Body of pancreas (tissue), 4 donors: ENCODE measurements at regions of chr10 and their contacts with region 1.

Region 1: DNA sequence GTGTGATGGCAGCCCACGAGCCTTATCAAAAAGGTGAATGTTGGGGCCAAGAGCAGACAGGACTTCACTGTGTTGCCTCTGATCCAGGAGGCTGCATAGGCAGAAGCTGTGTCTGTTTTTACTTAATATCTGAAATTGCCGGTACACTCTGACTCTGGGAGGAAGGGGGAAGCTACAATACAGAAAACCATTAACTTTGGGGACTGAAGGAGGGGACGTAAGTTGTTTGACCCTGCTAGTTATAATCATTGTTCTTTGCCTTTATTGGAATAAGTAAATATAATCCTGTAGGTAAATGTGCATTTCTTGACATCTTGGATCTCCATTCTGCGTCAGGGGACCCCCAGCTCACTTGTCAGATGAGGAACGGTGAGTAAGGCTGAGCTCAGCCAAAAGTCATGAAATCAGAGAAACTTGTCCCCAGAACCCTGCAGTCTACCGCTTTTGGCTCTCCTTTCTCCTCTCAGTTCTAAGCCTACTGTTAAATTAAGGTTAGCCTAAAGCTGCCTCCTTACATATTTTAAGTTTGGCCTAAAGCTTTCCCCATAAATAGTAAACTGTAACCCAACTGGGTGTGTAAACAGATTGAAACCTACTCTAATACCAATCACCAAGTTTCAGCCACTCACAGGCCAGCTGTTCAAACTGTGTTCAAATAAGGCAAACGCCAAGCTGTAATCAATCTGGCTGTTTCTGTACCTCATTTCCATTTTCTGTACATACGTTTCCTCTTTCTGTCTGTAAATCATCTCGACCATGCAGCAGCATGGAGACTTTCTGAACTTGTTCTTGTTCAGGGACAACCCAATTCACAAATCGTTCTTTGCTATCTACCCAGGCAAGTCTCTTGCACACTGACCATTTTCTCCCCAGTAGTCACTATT is 86.8 kb downstream of the SLC16A9 start:
- DNase-seq: no peak
- ATAC-seq: no peak
- H3K4me3 ChIP-seq: no peak overlapping the region
- H3K27ac ChIP-seq: no peak overlapping the region
- H3K4me1 ChIP-seq: peaks cover 8% of the 10 kb centered on the region
- H3K27me3 ChIP-seq: no peaks in the 10 kb centered on the region
- CTCF ChIP-seq: peak in 1 of 7 experiments; percentile 23
- POLR2A ChIP-seq: no peak

Region 2: GRCh38 chr10:58164517-58164916 is 1458.3 kb before region 1 on chr10:
- intact Hi-C with region 1: no loop called
- DNase-seq: no peak
- ATAC-seq: no peak
- H3K4me3 ChIP-seq: no peak overlapping the region
- H3K27ac ChIP-seq: no peak overlapping the region
- H3K4me1 ChIP-seq: no peaks in the 10 kb centered on the region
- H3K27me3 ChIP-seq: no peaks in the 10 kb centered on the region
- CTCF ChIP-seq: no peak
- POLR2A ChIP-seq: no peak

Region 3: DNA sequence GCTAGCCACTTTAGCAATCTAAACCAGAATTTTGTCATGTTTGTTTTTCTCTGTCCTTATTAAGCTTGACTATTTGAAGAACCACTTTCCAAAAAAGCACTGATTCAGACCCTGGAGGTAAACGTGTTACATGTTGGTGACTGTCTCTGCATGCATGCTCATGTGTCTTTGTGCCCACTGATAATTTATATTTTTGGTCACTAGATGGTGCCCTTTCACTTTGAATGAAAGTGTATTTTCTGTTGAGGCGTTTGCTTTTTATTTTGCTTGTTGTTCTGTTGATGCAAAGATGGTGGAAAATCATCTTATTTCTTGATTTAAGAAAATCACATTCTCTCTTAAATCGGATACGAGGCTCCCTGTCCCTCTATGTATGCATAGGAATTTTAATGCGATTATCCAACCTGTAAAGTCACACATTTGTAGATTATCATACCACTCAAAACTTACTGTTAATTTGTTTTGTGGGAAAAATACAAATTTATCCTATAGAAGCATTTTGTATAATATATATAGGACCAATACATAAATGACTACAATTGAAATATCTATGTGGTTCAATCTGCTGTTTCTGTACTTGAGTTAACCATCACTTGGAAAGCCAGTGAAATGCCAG is 840.9 kb before region 1 on chr10:
- intact Hi-C with region 1: loop called (anchors 5 kb)
- DNase-seq: peak in 1 of 4 donors; percentile 9
- ATAC-seq: peak; percentile 51
- H3K4me3 ChIP-seq: no peak overlapping the region
- H3K27ac ChIP-seq: no peak overlapping the region
- H3K4me1 ChIP-seq: peaks cover 14% of the 10 kb centered on the region
- H3K27me3 ChIP-seq: no peaks in the 10 kb centered on the region
- CTCF ChIP-seq: peak; percentile 8 to 71 (median 62)
- POLR2A ChIP-seq: no peak

Region 4: GRCh38 chr10:59240582-59241183 is 382.2 kb before region 1 on chr10:
- intact Hi-C with region 1: loop called (anchors 5 kb)
- DNase-seq: peak in 2 of 4 donors; percentile 11 to 18
- ATAC-seq: no peak
- H3K4me3 ChIP-seq: no peak overlapping the region
- H3K27ac ChIP-seq: no peak overlapping the region
- H3K4me1 ChIP-seq: no peaks in the 10 kb centered on the region
- H3K27me3 ChIP-seq: no peaks in the 10 kb centered on the region
- CTCF ChIP-seq: peak; percentile 13 to 83 (median 66)
- POLR2A ChIP-seq: no peak